Naive thymus-derived CD8-positive, alpha-beta T cell (primary cell): ENCODE measurements at regions of chr16 and their contacts with region 1.

Region 1: GRCh38 chr16:50024684-50025536 is at the start of gene CNEP1R1:
- DNase-seq: peak; percentile 81 to 98 (median 93)
- ATAC-seq: peak; percentile 93 to 96
- H3K4me3 Mint-ChIP-seq: peak within 1 kb of the TSS; percentile 92 to 99 (median 96)
- H3K27ac Mint-ChIP-seq: peak within 1 kb of the TSS; percentile 86 to 97 (median 94)
- H3K4me1 Mint-ChIP-seq: peaks cover 6 to 36% (median 22%) of the 10 kb centered on the region in 4 donors
- H3K27me3 Mint-ChIP-seq: no peaks in the 10 kb centered on the region
- polyA plus RNA-seq, gene CNEP1R1: 10.8 to 20.6 (median 12.3) TPM

Region 2: DNA sequence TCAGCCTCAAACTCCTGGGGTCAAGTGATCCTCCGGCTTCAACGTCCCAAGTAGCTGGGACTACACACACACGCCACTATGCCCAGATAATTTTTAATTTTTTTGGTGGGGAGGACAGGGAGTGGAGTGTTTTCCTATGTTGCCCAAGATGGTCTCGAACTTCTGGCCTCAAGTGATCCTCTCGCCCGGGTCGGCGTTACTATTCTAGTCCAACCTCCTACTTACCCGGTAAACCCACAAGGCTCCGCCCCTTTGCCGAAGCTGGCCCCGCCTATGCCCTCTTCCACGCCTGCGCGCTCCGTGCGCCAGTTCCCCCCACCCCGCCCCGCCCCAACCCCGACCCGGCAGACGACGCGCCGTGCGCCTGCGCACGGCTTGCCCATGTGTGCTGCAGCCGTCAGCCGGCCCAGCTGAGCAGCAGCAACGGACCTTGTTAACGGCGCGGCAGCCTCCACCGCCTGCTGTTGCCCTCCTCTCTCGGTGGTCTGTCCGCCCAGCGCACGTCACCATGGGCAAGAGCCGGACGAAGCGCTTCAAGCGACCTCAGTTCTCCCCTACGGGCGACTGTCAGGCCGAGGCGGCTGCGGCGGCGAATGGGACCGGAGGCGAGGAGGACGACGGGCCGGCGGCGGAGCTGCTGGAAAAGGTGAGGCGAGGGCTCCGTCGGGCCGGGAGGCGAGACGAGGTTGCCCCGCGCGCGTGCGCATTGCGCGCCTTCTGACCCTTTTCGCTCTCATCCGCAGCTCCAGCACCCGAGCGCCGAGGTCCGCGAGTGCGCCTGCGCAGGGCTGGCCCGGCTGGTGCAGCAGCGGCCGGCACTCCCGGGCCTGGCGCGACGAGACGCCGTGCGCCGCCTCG is 40.9 kb after region 1 on chr16 and contains the start of gene HEATR3:
- POLR2A ChIA-PET with region 1: interaction called, 29 read pairs
- DNase-seq: peak; percentile 87 to 95 (median 91)
- ATAC-seq: peak; percentile 77 to 87
- H3K4me3 Mint-ChIP-seq: peak within 1 kb of the TSS; percentile 85 to 95 (median 93)
- H3K27ac Mint-ChIP-seq: peak within 1 kb of the TSS; percentile 55 to 96 (median 92)
- H3K4me1 Mint-ChIP-seq: peaks cover 24 to 39% (median 34%) of the 10 kb centered on the region in 4 donors
- H3K27me3 Mint-ChIP-seq: no peaks in the 10 kb centered on the region
- polyA plus RNA-seq, gene HEATR3: 5.5 to 6.7 (median 5.6) TPM

Region 3: DNA sequence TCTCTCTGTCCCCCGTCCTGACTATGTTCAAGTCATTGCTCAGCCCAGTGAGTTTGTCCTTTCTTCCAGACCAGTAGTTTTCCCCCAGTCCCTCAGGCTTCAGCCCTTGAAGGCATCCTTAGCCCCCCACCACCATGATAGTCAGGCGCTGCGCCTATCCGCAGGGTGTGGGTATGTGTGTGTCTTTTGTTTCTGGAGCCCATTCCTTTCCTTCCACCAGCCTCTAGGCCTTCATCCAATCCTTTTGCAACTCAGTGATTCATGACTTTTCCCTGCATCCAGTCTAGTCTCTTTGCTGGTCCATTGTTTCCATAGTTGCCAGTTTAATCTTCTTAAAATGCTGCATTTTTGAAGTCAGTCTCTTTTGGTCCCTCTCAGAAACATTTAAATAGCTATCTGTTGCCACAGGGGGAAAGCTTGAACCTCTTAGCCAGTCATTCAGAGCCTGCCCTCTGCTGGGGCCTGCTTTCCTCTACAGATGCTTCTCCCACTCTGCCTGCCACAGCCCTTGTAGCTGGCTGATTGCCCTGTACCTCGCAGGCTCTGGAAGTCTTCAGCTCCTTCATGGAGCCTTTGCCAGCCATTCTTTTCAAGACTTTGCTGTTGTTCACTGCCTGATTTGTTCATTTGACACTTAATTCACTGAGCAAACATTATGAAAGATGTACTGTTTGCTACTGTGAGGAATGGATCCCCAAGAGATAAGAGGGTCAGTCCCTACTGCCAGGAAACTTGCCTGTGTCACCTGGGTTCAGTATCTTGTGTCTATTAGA is 185.5 kb after region 1 on chr16:
- POLR2A ChIA-PET with region 1: interaction called, 10 read pairs
- DNase-seq: peak; percentile 31 to 75 (median 55)
- ATAC-seq: peak; percentile 93 to 95
- H3K4me3 Mint-ChIP-seq: no peak overlapping the region
- H3K27ac Mint-ChIP-seq: peak overlapping the region; percentile 57 to 93 (median 84)
- H3K4me1 Mint-ChIP-seq: peaks cover 24 to 49% (median 31%) of the 10 kb centered on the region in 4 donors
- H3K27me3 Mint-ChIP-seq: no peaks in the 10 kb centered on the region